Activated naive CD4-positive, alpha-beta T cell treated with anti-CD3 and anti-CD28 coated beads, Interleukin-2, amount 10 ng/mL, durations not matched to agents 7 days and 5 days (primary cell): ENCODE measurements at regions of chr14 and their contacts with region 1.

Region 1: DNA sequence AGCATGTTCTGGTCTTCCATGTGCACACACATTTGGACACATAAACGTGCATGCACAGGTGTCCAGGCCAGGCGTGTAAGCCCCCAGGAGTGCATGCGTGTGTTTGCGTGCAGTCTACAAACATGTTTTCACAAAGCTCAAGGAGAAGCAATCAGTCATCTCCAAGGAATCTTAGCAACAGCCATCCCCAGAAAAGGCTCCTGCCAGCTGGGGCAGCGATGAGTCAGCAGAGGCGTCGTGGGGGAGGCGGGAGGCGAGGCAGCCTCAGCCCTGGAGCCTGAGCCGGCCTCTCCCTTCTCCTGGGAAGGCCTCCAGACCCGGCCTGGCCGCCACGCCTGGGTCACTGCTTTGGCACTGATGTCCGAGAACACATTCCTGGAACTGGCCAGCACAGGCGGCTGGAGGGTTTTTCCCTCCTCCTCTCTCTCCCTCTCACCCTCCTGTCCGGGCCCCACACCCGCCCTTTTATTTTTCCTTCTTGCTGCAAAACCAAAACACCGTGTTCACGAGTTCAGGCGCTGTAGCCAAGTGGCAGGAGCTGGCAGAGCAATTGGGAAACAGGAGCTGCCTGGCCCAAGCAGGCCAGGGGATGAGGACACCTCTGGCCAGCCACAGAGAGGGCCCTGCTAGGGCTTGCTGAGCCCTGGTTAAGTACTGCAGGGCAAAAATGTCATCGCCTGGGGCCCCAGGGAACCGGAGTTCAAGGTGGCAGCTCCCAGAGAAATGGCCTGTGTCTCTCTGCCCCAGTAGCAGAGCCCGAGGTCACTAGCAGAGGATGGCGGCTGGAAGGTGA is 92.7 kb downstream of the LRRC74A start:
- DNase-seq: no peak
- H3K4me3 Mint-ChIP-seq: no peak overlapping the region
- H3K27ac Mint-ChIP-seq: no peak overlapping the region
- H3K4me1 Mint-ChIP-seq: peaks cover 78% of the 10 kb centered on the region
- H3K27me3 Mint-ChIP-seq: peaks cover 22% of the 10 kb centered on the region

Region 2: DNA sequence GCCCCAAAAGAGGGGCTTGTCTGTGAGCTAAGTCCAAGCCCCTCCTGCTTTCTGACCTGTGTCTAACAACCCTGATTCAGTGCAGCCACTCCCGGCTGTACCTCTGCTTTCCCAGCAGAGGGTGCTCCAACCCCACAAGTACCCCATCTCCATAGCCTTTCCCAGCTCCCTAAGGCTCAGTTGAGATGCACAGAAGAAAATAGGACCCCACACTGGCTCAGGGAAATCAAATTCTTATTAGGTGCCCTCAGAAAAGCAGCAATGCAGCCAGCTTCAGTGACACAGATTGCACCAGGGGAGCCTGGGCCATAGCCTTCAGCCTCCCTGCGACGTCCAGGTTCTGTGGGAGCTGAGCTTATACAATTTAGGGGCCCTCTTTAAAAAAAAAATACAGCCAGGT is 42.9 kb before region 1 on chr14:
- CTCF ChIA-PET with region 1: interaction called, 97 read pairs
- DNase-seq: peak; percentile 63
- H3K4me3 Mint-ChIP-seq: no peak overlapping the region
- H3K27ac Mint-ChIP-seq: no peak overlapping the region
- H3K4me1 Mint-ChIP-seq: no peaks in the 10 kb centered on the region
- H3K27me3 Mint-ChIP-seq: peaks cover 37% of the 10 kb centered on the region

Region 3: GRCh38 chr14:76894308-76894892 is 24.5 kb before region 1 on chr14:
- CTCF ChIA-PET with region 1: no interaction called
- DNase-seq: no peak
- H3K4me3 Mint-ChIP-seq: no peak overlapping the region
- H3K27ac Mint-ChIP-seq: no peak overlapping the region
- H3K4me1 Mint-ChIP-seq: no peaks in the 10 kb centered on the region
- H3K27me3 Mint-ChIP-seq: peaks cover 5% of the 10 kb centered on the region

Region 4: GRCh38 chr14:76947078-76947837 is 28.3 kb after region 1 on chr14:
- CTCF ChIA-PET with region 1: interaction called, 55 read pairs
- DNase-seq: peak; percentile 86
- H3K4me3 Mint-ChIP-seq: no peak overlapping the region
- H3K27ac Mint-ChIP-seq: peak overlapping the region; percentile 81
- H3K4me1 Mint-ChIP-seq: peaks cover 54% of the 10 kb centered on the region
- H3K27me3 Mint-ChIP-seq: no peaks in the 10 kb centered on the region

Region 5: DNA sequence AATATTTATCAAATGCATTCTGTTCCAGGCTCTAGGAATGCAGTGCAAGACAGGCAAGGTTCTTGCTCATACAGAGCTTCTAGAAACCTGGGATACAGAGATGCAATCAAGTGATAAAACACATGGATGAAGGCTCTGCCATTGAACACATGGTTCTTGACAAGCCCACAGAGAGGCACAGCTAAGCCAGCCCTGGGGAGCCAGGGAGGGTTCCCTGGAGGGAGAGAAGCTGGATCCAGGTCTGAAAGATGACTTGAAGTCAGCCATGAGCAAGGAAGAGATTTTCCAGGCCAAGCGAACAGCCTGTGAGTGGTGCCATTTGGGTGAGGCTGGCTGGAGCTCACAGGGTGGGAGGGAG is 43.3 kb after region 1 on chr14:
- CTCF ChIA-PET with region 1: interaction called, 55 read pairs
- DNase-seq: no peak
- H3K4me3 Mint-ChIP-seq: peak overlapping the region; percentile 69
- H3K27ac Mint-ChIP-seq: peak overlapping the region; percentile 96
- H3K4me1 Mint-ChIP-seq: peaks cover 90% of the 10 kb centered on the region
- H3K27me3 Mint-ChIP-seq: peaks cover 27% of the 10 kb centered on the region

Region 6: GRCh38 chr14:77076113-77076631 is 157.2 kb after region 1 on chr14:
- CTCF ChIA-PET with region 1: interaction called, 273 read pairs
- DNase-seq: no peak
- H3K4me3 Mint-ChIP-seq: no peak overlapping the region
- H3K27ac Mint-ChIP-seq: no peak overlapping the region
- H3K4me1 Mint-ChIP-seq: no peaks in the 10 kb centered on the region
- H3K27me3 Mint-ChIP-seq: peaks cover 27% of the 10 kb centered on the region